ENCODE measurements at regions of chrX and their contacts with region 1.

Region 1: DNA sequence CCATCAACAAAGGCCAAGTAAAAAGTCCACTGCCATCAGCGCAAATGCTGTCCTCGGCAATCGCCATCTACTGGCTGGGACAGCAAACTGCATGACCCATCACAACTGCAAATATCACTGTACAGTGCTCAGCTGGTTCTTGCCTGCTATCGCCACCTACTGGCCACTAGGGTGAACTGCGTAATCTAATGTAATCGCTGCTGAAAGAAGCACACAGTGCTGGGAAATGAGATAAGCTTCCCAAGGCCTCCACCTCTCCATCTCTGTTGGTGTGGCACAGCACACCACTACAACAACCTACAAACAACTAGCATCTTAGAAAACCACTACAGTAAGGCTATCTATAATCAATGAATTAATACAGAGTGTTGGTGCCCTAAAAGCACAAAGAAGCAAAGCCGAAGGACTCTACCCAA is 298.3 kb downstream of the TEX13A start:
- DNase-seq: peak; percentile 61 to 88 (median 75)
- H3K4me3 ChIP-seq: no peak overlapping the region
- H3K27ac ChIP-seq: no peak overlapping the region
- H3K4me1 ChIP-seq: no peaks in the 10 kb centered on the region
- H3K27me3 ChIP-seq: peaks cover 11% of the 10 kb centered on the region
- CTCF ChIP-seq: peak; percentile 78 to 98 (median 88)
- POLR2A ChIP-seq: no peak

Region 2: DNA sequence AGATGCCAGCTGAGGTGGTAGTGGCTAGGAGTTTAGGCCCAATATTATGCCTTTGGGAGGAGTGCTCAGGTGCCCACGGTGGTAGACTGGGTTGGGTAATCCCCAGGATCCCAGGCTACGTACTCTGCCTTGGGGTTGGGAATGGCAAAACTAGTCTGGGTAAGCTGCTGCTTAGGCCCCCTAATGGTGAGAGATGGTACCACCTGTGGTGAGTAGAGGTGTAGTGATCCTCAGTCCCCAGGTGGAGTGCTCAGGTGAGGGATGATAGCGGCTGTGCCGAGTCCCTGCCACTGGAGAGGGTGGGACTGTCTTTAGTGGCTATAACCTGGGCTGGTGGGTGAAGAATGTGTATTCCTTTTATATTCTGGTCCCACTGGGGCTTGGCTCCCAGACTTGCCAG is 281.0 kb before region 1 on chrX:
- intact Hi-C with region 1: no loop called
- DNase-seq: no peak
- H3K4me3 ChIP-seq: no peak overlapping the region
- H3K27ac ChIP-seq: no peak overlapping the region
- H3K4me1 ChIP-seq: no peaks in the 10 kb centered on the region
- H3K27me3 ChIP-seq: peaks cover 12% of the 10 kb centered on the region
- CTCF ChIP-seq: no peak
- POLR2A ChIP-seq: no peak

Region 3: GRCh38 chrX:104668550-104668949 is 253.7 kb before region 1 on chrX:
- intact Hi-C with region 1: loop called in 1 of 2 experiments (anchors 5 kb)
- DNase-seq: peak in 1 of 7 donors; percentile 21
- H3K4me3 ChIP-seq: no peak overlapping the region
- H3K27ac ChIP-seq: no peak overlapping the region
- H3K4me1 ChIP-seq: no peaks in the 10 kb centered on the region
- H3K27me3 ChIP-seq: no peaks in the 10 kb centered on the region
- CTCF ChIP-seq: peak in 2 of 6 experiments; percentile 29
- POLR2A ChIP-seq: no peak

Measured in adrenal gland (tissue), 19 donors.